Activated naive CD4-positive, alpha-beta T cell treated with anti-CD3 and anti-CD28 coated beads for 36 hours (primary cell): ENCODE measurements at regions of chr4 and their contacts with region 1.

Region 1: DNA sequence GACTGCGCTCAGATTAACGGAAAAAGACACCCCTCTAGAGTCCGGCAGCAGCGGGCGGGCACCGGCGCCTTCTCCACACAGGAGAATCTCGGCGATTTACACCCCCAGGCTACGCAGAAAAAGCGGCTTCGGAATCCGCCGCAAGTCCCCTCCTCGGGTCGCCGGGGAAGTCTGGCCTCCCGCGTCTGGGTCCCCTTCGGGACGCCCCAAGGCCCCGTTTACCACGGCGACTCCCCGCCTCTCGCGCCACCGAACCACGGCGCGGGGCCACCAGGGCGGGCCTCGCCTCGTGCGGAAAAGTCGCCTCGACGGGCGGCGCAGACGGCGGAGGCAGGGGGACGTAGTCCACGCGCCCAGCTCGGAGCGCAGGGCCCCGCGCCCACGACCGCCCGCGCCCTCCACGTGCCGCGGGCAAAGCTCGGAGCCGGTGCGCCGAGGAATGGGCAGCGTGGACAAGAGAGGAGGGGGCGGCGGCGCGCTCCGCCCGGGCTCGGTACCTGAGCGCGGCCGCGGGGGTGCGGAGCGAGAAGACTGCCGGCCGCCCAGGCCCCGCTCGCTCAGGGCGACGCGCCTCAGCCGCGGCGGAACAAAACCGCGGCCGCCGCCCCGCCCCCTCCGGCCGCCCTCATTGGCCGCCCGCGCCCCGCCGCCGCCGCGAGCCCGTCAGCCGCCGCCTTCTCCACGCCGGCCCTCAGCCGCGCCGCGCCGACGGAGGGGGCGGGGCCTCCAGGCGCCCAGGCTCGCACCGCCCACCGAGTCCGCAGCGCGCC is at the start of gene FAM53A:
- DNase-seq: peak; percentile 32
- H3K4me3 Mint-ChIP-seq: peak within 1 kb of the TSS; percentile 81
- H3K27ac Mint-ChIP-seq: no peak within 1 kb of the TSS
- H3K4me1 Mint-ChIP-seq: peaks cover 12% of the 10 kb centered on the region
- H3K27me3 Mint-ChIP-seq: no peaks in the 10 kb centered on the region
- total RNA-seq, gene FAM53A: 2.6 to 3.0 TPM

Region 2: DNA sequence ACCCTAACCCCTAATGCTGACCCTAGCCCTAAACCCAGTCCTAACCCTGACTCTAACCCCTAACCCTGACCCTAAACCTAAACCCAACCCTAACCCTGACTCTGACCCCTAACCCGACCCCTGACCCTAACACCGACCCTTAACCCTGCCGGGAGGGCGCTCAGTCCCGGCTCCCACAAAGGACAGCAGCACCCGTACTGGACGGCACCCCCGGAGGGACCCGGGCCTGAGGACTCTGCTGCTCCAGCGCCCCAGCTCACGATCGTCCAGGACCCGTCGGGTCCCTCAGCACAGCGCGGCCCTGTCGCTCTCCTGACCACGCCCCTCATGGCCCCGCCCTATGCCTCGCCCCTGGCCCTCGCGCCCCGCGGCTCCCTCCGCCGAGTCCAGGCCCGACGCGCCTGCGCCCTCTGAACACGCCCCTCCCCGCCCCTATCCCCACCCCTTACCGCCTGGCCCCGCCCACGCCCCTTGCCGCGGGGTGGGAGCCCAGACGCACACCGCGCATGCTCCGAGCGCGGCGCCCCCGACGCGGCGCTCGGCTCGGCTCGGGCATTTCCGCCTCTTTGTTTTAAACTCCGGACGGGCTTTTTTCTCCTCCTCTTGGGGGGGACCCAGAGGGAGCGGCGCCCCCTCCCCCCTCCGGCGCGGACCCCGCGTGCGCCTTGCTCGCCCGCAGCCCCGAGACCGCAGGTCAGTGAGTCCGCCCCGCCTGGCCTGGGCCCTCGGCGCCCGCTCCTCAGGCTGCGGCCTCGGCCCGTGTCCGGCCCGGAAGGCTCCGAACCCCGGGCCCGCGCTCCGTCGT is 978.4 kb before region 1 on chr4 and contains the start of gene PCGF3:
- CTCF ChIA-PET with region 1: no interaction called
- intact Hi-C with region 1: loop called (anchors 5 kb)
- DNase-seq: peak; percentile 96
- H3K4me3 Mint-ChIP-seq: peak within 1 kb of the TSS; percentile 76
- H3K27ac Mint-ChIP-seq: no peak within 1 kb of the TSS
- H3K4me1 Mint-ChIP-seq: peaks cover 13% of the 10 kb centered on the region
- H3K27me3 Mint-ChIP-seq: no peaks in the 10 kb centered on the region
- total RNA-seq, gene PCGF3: 24.7 to 25.9 TPM

Region 3: GRCh38 chr4:931960-932712 is 751.8 kb before region 1 on chr4 and contains the starts of genes GAK and TMEM175:
- CTCF ChIA-PET with region 1: no interaction called
- intact Hi-C with region 1: loop called (anchors 5 kb)
- DNase-seq: peak; percentile 96
- H3K4me3 Mint-ChIP-seq: peak within 1 kb of the TSS; percentile 94
- H3K27ac Mint-ChIP-seq: peak within 1 kb of the TSS; percentile 90
- H3K4me1 Mint-ChIP-seq: peaks cover 45% of the 10 kb centered on the region
- H3K27me3 Mint-ChIP-seq: no peaks in the 10 kb centered on the region
- total RNA-seq, gene GAK: 87.6 to 96.8 TPM
- total RNA-seq, gene TMEM175: 13.9 to 15.8 TPM

Region 4: GRCh38 chr4:1579901-1580691 is 103.8 kb before region 1 on chr4:
- CTCF ChIA-PET with region 1: no interaction called
- intact Hi-C with region 1: loop called (anchors 2 kb)
- DNase-seq: peak; percentile 89
- H3K4me3 Mint-ChIP-seq: peak overlapping the region; percentile 64
- H3K27ac Mint-ChIP-seq: no peak overlapping the region
- H3K4me1 Mint-ChIP-seq: peaks cover 4% of the 10 kb centered on the region
- H3K27me3 Mint-ChIP-seq: no peaks in the 10 kb centered on the region

Region 5: DNA sequence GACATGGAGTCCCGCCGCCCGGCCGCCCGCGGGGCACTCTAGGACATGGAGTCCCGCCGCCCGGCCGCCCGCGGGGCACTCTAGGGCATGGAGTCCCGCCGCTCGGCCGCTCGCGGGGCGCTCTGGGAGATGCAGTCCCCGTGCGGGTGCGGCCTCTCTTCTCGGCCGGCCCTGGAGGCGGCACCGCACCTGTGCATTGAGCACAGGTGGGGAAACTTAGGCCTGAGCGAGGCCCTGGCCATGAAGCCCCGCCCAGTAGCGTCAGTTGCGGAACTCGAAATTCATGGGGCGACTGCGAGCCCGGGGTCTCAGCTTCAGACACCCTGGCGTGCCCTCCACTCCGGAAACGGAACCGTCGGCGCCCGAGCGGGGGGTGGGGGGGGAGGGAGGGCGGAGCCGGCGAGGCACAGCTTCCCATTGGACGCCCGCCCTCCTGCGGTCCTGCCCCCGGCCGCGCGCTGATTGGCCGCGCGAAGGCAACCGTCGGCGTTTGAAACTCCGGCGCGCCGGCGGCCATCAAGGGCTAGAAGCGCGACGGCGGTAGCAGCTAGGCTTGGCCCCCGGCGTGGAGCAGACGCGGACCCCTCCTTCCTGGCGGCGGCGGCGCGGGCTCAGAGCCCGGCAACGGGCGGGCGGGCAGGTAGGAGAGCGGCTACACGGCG is 37.2 kb after region 1 on chr4 and contains the starts of genes TACC3 and TMEM129:
- CTCF ChIA-PET with region 1: no interaction called
- intact Hi-C with region 1: loop called (anchors 2 kb)
- DNase-seq: peak; percentile 96
- H3K4me3 Mint-ChIP-seq: peak within 1 kb of the TSS; percentile 94
- H3K27ac Mint-ChIP-seq: peak within 1 kb of the TSS; percentile 98
- H3K4me1 Mint-ChIP-seq: peaks cover 53% of the 10 kb centered on the region
- H3K27me3 Mint-ChIP-seq: no peaks in the 10 kb centered on the region
- total RNA-seq, gene TACC3: 246 to 264 TPM
- total RNA-seq, gene TMEM129: 19.0 to 19.8 TPM